ENCODE measurements at regions of chrX and their contacts with region 1.

Region 1: GRCh38 chrX:136028251-136028984 is 43.2 kb downstream of the SLC9A6 start:
- DNase-seq: no peak
- H3K4me3 ChIP-seq: no peak overlapping the region
- H3K27ac ChIP-seq: no peak overlapping the region
- H3K4me1 ChIP-seq: no peaks in the 10 kb centered on the region
- H3K27me3 ChIP-seq: no peaks in the 10 kb centered on the region
- CTCF ChIP-seq: peak in 10 of 11 experiments; percentile 34 to 68 (median 51)
- POLR2A ChIP-seq: no peak

Region 2: DNA sequence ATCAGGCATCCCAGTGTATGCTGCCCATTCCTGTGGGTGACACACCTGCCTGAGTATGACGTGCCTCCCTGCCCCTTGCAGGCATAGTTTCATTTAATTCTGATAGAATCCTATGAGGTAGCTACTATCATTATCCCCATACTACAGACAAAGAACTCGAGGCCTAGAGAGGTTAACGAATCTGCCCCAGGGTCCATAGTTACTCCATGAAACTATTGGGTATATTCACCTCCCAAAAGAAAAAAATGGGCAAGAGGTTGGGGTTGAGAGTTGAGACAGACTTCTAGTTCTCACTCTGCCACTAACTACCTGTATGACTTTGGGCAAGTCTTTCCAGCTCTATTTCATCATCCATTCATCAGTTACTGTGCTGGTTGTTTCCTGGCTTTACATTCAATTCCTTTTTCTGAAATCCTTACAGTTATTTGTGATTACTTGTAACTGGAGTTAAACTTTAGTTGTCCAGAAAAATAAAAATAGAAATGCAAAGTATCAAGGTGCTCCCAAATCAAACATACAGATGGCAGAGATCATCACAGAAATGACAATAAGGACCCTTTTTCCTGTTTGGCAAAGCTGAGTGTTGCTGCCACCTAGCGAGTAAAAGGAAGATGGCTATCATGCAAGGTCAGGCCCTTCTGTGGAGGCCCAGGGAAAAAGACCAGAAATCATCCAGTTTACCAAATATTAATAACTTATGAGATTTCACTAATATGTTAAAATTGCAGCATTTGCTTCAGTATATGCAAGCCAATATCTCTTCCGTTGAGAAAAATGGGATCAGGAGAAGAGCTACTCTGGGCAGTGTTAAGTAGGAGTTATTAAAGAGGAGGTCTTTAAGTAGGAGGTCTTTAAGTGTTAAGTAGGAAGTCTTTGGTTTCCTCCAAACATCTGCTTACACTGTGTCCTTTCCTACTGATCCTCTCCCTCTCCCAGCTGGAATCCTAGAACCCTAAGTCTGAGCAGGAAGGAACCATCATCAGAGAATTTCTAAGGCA is 239.9 kb after region 1 on chrX:
- intact Hi-C with region 1: loop called (anchors 10 kb)
- DNase-seq: no peak
- H3K4me3 ChIP-seq: no peak overlapping the region
- H3K27ac ChIP-seq: no peak overlapping the region
- H3K4me1 ChIP-seq: peaks cover 0 to 8% (median 0%) of the 10 kb centered on the region in 6 donors
- H3K27me3 ChIP-seq: peaks cover 0 to 4% (median 0%) of the 10 kb centered on the region in 7 donors
- CTCF ChIP-seq: peak; percentile 41 to 84 (median 76)
- POLR2A ChIP-seq: no peak

Region 3: DNA sequence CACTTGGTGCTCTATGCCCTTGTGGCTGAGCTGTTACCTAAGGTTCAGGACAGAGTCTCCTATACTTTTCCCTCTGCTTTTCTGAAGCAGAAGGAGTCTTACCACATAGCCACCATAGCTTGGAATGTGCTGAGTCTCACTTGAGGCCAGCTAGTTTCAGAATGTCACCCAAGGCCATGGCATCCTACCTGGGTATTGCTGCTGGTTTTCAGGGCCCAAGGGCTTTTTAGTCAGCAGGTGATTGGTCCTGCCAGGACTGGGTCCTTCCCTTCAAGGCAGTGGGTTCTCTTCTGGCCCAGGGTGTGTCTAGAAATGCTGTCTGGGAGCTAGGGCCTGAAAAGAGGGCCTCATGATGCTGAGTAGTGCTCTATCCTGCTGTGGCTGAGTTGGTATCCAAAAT is 536.3 kb after region 1 on chrX:
- intact Hi-C with region 1: no loop called
- DNase-seq: no peak
- H3K4me3 ChIP-seq: no peak overlapping the region
- H3K27ac ChIP-seq: no peak overlapping the region
- H3K4me1 ChIP-seq: no peaks in the 10 kb centered on the region
- H3K27me3 ChIP-seq: peaks cover 0 to 13% (median 0%) of the 10 kb centered on the region in 7 donors
- CTCF ChIP-seq: no peak
- POLR2A ChIP-seq: no peak

Measured in spleen (tissue), 13 donors.